ENCODE measurements at regions of chr12 and their contacts with region 1.

Region 1: DNA sequence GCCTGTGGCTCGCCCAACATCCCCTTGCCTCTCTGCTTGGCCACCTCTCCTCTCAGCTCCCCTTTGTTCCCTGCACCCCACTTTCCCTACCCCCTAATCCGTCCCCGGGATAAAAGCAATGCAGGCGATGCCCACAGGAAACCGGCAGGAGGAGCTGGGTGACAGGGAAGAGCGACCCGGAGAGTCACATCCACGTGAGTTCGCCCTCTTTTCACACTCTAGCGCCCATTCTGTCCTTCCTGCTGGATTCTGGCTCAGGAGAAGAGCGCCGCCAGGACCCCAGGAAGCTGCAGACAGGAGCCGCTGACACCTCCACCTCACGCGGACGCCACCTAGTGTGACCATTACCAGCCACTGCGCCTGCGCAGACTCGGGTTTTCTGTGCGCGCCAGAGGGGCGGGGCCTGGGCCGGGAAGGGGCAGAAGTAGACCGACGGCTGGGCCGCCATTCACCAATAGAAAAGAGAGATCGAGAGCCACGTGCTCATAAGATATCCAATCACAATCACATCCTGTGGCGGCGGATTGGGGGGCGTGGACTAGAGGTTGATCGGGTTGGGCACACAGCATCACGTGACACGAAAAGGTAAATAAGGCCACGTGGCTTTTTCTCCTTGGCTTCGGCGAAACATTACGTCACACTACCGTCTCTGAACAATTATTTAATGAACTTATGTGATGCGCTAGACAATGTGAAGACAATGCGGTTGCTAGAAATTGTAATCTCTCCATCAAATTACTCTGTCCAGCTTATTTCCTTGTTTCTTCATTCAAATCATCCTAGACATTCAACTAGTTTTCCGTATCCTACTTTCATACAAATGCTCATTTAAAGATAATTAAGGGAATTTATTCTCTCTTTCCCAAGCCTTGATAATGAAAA is 10.1 kb downstream of the PLA2G1B start:
- DNase-seq: peak; percentile 99 to 100 (median 99)
- ATAC-seq: peak; percentile 99
- H3K4me3 ChIP-seq: peak overlapping the region; percentile 48
- H3K27ac ChIP-seq: peak overlapping the region; percentile 85
- H3K4me1 ChIP-seq: peaks cover 3 to 10% of the 10 kb centered on the region in 2 experiments; a peak in 4 of 5 replicates
- H3K27me3 ChIP-seq: no peaks in the 10 kb centered on the region
- CTCF ChIP-seq: peak; percentile 74 to 94 (median 85)
- EP300 ChIP-seq: no peak
- POLR2A ChIP-seq: peak; percentile 93
- RAD21 ChIP-seq: peak in 1 of 2 experiments; percentile 49; a peak in 2 of 4 replicates

Region 2: GRCh38 chr12:120006209-120006975 is 311.1 kb before region 1 on chr12:
- CTCF ChIA-PET with region 1: no interaction called
- POLR2A ChIA-PET with region 1: no interaction called
- in situ Hi-C with region 1: no loop called
- intact Hi-C with region 1: no loop called
- DNase-seq: no peak
- ATAC-seq: no peak
- H3K4me3 ChIP-seq: no peak overlapping the region
- H3K27ac ChIP-seq: no peak overlapping the region
- H3K4me1 ChIP-seq: no peaks in the 10 kb centered on the region
- H3K27me3 ChIP-seq: peaks cover 0 to 7% of the 10 kb centered on the region in 2 experiments; a peak in 3 of 5 replicates
- CTCF ChIP-seq: no peak
- EP300 ChIP-seq: no peak
- POLR2A ChIP-seq: no peak
- RAD21 ChIP-seq: no peak

Region 3: DNA sequence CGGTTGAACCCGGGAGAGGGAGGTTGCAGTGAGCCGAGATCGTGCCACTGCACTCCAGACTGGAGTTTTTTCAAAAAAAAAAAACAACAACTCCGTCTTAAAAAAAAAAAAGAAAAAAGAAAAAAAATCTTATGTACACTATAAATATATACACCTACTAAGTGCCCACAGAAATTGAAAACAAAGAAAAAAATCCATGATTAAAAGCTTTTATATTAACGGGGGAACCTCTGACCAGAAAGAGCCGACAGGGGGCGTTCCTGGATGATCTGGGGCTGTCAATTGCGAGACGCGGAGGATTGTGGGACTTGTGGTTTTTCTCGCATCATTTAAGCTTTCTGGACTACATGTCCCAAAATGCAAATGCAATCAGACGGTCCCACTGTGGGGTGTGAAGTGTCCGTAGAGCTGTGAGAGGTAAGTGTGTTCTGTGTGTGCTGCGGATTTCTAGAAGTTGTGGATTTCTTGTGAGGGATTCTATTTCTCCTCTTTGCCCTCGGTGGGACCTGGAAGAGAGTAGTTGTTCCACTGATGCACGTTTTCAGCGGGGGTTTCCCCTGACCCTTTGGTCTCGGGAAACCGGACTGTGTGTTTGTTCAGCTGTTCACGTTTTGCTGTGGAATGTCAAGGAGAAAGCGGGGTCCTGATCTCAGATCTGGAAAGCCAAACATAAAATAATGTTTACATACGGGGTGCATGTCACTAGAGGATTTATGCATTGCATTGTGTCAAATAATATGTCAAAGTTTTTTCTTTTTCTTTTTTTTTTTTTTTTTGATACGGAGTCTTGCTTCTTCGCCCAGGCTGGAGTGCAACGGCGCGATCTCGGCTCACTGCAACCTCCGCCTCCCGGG is 15.3 kb before region 1 on chr12 and contains the start of gene SIRT4:
- CTCF ChIA-PET with region 1: no interaction called
- POLR2A ChIA-PET with region 1: interaction called, 22 read pairs
- in situ Hi-C with region 1: no loop called
- intact Hi-C with region 1: no loop called
- DNase-seq: peak; percentile 91 to 96 (median 92)
- ATAC-seq: peak; percentile 98
- H3K4me3 ChIP-seq: peak within 1 kb of the TSS; percentile 46
- H3K27ac ChIP-seq: peak within 1 kb of the TSS; percentile 56
- H3K4me1 ChIP-seq: peaks cover 0 to 5% of the 10 kb centered on the region in 2 experiments; a peak in 1 of 5 replicates
- H3K27me3 ChIP-seq: no peaks in the 10 kb centered on the region
- CTCF ChIP-seq: peak; percentile 68 to 93 (median 86)
- EP300 ChIP-seq: no peak
- POLR2A ChIP-seq: peak; percentile 64; the same call in 1 of the 2 replicates
- RAD21 ChIP-seq: no peak
- polyA plus RNA-seq, gene SIRT4: 5.1 to 5.2 TPM

Region 4: DNA sequence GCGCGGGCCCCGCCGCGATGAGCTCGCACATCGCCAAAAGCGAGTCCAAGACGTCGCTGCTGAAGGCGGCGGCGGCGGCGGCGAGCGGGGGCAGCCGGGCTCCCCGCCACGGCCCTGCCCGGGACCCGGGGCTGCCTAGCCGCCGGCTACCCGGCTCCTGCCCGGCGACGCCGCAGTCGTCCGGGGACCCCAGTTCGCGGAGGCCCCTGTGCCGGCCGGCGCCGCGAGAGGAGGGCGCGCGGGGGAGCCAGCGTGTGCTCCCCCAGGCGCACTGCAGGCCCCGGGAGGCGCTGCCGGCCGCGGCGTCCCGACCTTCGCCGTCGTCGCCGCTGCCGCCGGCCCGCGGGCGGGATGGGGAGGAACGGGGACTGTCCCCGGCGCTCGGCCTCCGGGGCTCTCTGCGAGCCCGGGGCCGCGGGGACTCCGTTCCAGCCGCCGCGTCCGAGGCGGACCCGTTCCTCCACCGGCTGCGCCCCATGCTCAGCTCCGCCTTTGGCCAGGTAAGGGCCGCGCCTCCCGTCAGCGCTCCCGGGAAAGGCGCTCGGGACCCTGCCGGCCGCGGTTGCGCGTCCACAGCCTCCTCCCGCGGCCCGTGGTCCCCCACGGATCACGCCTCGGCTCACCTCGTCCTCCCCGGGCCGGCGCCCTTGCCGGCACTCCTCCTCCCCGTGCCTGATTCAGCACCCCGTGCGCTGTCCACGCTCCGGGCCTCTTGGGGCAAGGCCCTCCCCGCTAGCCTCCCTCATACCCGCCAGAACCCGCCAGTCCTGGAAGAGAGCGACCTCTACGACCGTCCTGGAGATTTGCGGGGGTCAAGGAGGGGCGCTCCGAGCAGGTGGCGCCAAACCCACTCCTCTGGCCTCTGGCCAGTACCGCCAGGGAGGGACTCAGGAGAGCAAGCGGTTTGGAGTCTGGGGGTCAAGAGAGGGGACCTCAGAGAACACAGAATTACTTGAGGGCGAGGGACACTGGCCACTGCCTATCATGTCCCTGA is 323.7 kb after region 1 on chr12:
- CTCF ChIA-PET with region 1: no interaction called
- POLR2A ChIA-PET with region 1: no interaction called
- in situ Hi-C with region 1: no loop called
- intact Hi-C with region 1: loop called (anchors 10 kb)
- DNase-seq: peak; percentile 66 to 79 (median 74)
- ATAC-seq: peak; percentile 92
- H3K4me3 ChIP-seq: peak overlapping the region; percentile 39
- H3K27ac ChIP-seq: no peak overlapping the region
- H3K4me1 ChIP-seq: peaks cover 0 to 19% of the 10 kb centered on the region in 2 experiments; a peak in 3 of 5 replicates
- H3K27me3 ChIP-seq: peaks cover 29 to 40% of the 10 kb centered on the region in 2 experiments
- CTCF ChIP-seq: peak in 2 of 3 experiments; percentile 21 to 27; a peak in 2 of 6 replicates
- EP300 ChIP-seq: no peak
- POLR2A ChIP-seq: no peak
- RAD21 ChIP-seq: no peak